ENCODE measurements at regions of chr13 and their contacts with region 1.

Region 1: DNA sequence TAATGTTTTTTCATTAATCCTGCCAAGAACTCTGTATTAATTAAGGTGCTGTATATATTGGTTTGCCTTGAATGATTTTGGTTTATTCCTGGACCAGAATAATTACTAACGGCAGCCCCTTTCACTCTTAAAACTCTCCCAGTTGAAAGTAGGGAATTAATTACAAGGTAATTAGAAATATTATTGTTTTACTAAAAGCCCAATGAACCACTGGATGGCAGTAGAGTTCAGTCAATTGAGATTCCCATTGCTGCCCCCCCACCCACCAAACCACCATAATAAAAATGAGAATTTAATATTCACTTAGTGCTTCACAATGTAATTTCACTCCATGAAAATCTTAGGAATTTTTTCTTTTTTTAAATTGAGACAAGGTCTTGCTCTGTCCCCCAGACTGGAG is 13.7 kb downstream of the WBP4 start:
- DNase-seq: no peak
- ATAC-seq: no peak
- H3K4me3 ChIP-seq: no peak overlapping the region
- H3K27ac ChIP-seq: no peak overlapping the region
- H3K4me1 ChIP-seq: no peaks in the 10 kb centered on the region
- H3K27me3 ChIP-seq: no peaks in the 10 kb centered on the region
- CTCF ChIP-seq: peak; percentile 17 to 71 (median 58)

Region 2: DNA sequence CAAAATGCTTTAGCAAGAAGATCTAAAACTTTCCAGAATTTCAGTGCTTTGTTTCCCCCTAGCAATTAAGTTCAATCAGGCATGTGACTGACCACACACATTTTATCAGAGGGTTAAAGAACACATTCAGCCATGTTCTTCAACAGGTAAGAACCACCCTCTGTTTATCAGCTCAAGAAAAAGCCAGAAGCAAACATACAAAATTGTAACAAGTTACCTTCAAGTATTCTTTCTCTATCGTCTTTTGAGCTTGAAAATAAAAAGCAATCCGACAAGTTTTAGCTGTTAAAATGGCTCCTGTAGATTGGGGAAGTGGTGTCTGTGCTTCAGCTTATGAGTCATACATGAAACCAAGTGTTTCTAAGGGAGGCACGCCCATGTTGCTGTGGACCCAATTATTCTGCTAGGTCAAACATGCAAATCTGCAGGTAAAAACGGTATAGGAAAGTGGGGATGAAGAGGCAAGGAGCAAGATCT is 56.0 kb before region 1 on chr13 and contains the start of gene ELF1:
- intact Hi-C with region 1: no loop called
- DNase-seq: peak in 1 of 2 donors; percentile 39
- ATAC-seq: peak; percentile 80 to 91 (median 88)
- H3K4me3 ChIP-seq: peak within 1 kb of the TSS in 6 of 10 donors; percentile 4 to 57 (median 32)
- H3K27ac ChIP-seq: peak within 1 kb of the TSS in 9 of 10 donors; percentile 31 to 93 (median 53)
- H3K4me1 ChIP-seq: peaks cover 0 to 80% (median 57%) of the 10 kb centered on the region in 9 donors
- H3K27me3 ChIP-seq: no peaks in the 10 kb centered on the region
- CTCF ChIP-seq: no peak
- total RNA-seq, gene ELF1: 31.1 to 60.5 (median 39.5) TPM

Region 3: DNA sequence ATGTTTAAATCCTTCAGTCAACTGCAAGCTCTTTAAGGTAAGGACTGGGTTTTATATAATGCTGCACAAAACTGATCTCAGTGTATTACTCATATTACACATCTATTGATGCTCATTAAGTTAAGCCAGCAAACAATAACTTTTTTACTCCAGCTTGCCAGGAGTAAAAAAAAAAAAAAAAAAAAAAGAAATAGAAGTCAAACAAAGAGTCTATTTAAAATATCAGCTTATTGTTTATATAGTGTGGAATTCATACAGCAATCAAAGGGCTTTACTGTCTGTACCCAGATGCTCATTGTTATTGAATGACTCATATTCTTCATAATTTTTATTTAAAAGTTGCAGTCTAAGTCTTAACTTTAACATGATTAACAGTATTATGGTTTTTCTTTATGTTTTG is 141.1 kb after region 1 on chr13:
- intact Hi-C with region 1: loop called in 5 of 10 experiments (anchors 5 kb)
- DNase-seq: no peak
- ATAC-seq: no peak
- H3K4me3 ChIP-seq: no peak overlapping the region
- H3K27ac ChIP-seq: no peak overlapping the region
- H3K4me1 ChIP-seq: no peaks in the 10 kb centered on the region
- H3K27me3 ChIP-seq: no peaks in the 10 kb centered on the region
- CTCF ChIP-seq: no peak

Region 4: DNA sequence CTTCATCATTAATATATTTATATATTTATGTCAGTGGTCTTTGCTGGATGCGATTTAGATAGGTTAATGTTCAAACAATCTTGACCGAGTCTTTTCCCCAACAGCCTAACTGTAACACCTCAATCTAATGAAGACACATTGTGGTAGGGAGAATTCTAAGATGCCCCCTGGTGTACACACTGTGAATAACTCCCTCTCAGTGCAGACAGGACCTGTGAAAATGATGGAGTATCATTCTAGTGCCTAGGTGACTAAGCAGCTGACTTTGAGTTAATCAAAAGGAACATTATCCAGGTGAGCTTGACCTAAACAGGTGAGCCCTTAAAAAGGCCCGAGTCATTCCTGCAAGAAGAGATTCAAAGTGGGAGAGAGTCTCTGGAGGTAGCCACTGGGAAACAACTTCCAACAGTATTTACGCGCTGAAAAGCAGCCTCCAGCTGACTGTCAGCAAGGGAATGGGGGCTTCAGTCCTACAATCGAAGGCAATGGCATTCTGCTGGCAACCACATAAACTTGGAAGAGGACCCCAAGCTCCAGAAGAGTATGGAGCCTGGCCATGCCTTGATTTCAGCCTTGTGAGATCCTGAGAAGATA is 147.3 kb after region 1 on chr13:
- intact Hi-C with region 1: loop called (anchors 1 to 5 kb)
- DNase-seq: peak in 1 of 2 donors; percentile 30
- ATAC-seq: peak in 7 of 8 donors; percentile 62 to 88 (median 75)
- H3K4me3 ChIP-seq: no peak overlapping the region
- H3K27ac ChIP-seq: no peak overlapping the region
- H3K4me1 ChIP-seq: no peaks in the 10 kb centered on the region
- H3K27me3 ChIP-seq: no peaks in the 10 kb centered on the region
- CTCF ChIP-seq: peak; percentile 57 to 85 (median 76)

Measured in heart right ventricle (tissue), 16 donors.